RWPE1 (cell line): ENCODE measurements at regions of chr20 and their contacts with region 1.

Region 1: DNA sequence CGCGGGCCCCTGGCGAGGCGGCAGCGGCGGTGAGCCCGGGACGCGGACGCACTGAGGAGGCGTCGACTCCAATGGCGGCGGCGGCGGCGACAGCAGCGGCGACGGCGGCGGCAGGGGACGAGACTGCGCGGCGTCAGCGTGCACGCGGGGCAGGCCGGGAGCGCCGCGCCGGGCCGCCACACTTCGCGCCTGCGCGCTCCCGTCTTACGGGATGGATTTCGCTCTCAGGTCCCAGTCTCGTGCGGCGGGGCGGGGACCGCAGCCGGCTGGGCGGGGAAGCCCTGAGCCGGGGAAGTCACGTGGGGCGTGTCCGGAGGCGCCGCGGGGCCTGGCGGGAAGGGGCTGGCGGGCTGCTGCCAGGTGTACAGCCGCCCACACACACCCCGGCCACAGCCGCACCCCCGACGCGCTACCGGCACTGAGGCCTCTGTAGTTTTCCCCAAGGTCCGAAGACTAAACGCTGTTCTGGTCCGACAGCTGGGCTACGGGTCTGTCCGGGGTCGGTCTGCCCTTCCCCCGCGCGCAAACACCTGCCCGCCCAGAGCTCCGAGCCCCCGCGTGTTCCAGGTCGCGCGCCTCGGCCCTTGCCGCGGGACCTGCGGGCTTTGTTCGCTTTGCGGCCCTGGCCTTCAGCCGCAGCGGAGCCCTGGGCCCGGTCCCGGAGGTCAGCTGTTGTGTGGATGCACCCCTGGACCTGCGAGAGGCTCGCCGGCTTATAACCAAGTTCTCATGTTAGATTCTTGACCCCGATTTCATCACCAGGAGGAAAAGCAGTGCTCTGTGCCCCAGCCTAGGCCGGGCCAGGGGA is at the start of gene YTHDF1:
- DNase-seq: peak; percentile 100
- H3K27ac ChIP-seq: peak within 1 kb of the TSS; percentile 78
- CTCF ChIP-seq: no peak

Region 2: GRCh38 chr20:63129991-63130657 is 86.1 kb before region 1 on chr20:
- CTCF ChIA-PET with region 1: no interaction called
- POLR2A ChIA-PET with region 1: no interaction called
- DNase-seq: no peak
- H3K27ac ChIP-seq: no peak overlapping the region
- CTCF ChIP-seq: no peak

Region 3: GRCh38 chr20:63178889-63179686 is 37.2 kb before region 1 on chr20:
- CTCF ChIA-PET with region 1: interaction called, 15 read pairs
- POLR2A ChIA-PET with region 1: no interaction called
- DNase-seq: peak; percentile 65
- H3K27ac ChIP-seq: no peak overlapping the region
- CTCF ChIP-seq: peak; percentile 78

Region 4: GRCh38 chr20:63230800-63231268 is 14.6 kb after region 1 on chr20:
- CTCF ChIA-PET with region 1: interaction called, 19 read pairs
- POLR2A ChIA-PET with region 1: no interaction called
- DNase-seq: no peak
- H3K27ac ChIP-seq: no peak overlapping the region
- CTCF ChIP-seq: peak; percentile 71